ENCODE measurements at regions of chr22 and their contacts with region 1.

Region 1: GRCh38 chr22:50562523-50563412 is at the start of gene SYCE3:
- DNase-seq: peak; percentile 97
- ATAC-seq: peak; percentile 96
- H3K4me3 ChIP-seq: peak within 1 kb of the TSS; percentile 5 to 83 (median 72)
- H3K4me3 Mint-ChIP-seq: peak within 1 kb of the TSS; percentile 87
- H3K27ac ChIP-seq: peak within 1 kb of the TSS in 1 of 2 donors; percentile 37
- H3K27ac Mint-ChIP-seq: peak within 1 kb of the TSS; percentile 87
- H3K4me1 ChIP-seq: peaks cover 5 to 9% of the 10 kb centered on the region in 2 donors
- H3K4me1 Mint-ChIP-seq: peaks cover 16% of the 10 kb centered on the region
- H3K27me3 ChIP-seq: no peaks in the 10 kb centered on the region
- H3K27me3 Mint-ChIP-seq: no peaks in the 10 kb centered on the region
- CTCF ChIP-seq: peak; percentile 89
- total RNA-seq, gene SYCE3: not detected in 2 replicates

Region 2: GRCh38 chr22:50530877-50531545 is 31.8 kb before region 1 on chr22:
- CTCF ChIA-PET with region 1: interaction called, 54 read pairs
- POLR2A ChIA-PET with region 1: interaction called, 32 read pairs
- intact Hi-C with region 1: loop called (anchors 1 kb)
- DNase-seq: peak; percentile 95
- ATAC-seq: peak; percentile 44
- H3K4me3 ChIP-seq: peak overlapping the region; percentile 47 to 95 (median 95)
- H3K4me3 Mint-ChIP-seq: peak overlapping the region; percentile 95
- H3K27ac ChIP-seq: peak overlapping the region; percentile 99 to 100
- H3K27ac Mint-ChIP-seq: peak overlapping the region; percentile 99
- H3K4me1 ChIP-seq: peaks cover 22 to 73% of the 10 kb centered on the region in 2 donors
- H3K4me1 Mint-ChIP-seq: peaks cover 54% of the 10 kb centered on the region
- H3K27me3 ChIP-seq: no peaks in the 10 kb centered on the region
- H3K27me3 Mint-ChIP-seq: no peaks in the 10 kb centered on the region
- CTCF ChIP-seq: no peak

Region 3: GRCh38 chr22:50537765-50538164 is 25.0 kb before region 1 on chr22:
- CTCF ChIA-PET with region 1: interaction called, 20 read pairs
- POLR2A ChIA-PET with region 1: interaction called, 9 read pairs
- intact Hi-C with region 1: loop called (anchors 2 kb)
- DNase-seq: no peak
- ATAC-seq: no peak
- H3K4me3 ChIP-seq: no peak overlapping the region
- H3K4me3 Mint-ChIP-seq: peak overlapping the region; percentile 56
- H3K27ac ChIP-seq: peak overlapping the region; percentile 95 to 96
- H3K27ac Mint-ChIP-seq: peak overlapping the region; percentile 92
- H3K4me1 ChIP-seq: peaks cover 39 to 72% of the 10 kb centered on the region in 2 donors
- H3K4me1 Mint-ChIP-seq: peaks cover 68% of the 10 kb centered on the region
- H3K27me3 ChIP-seq: no peaks in the 10 kb centered on the region
- H3K27me3 Mint-ChIP-seq: no peaks in the 10 kb centered on the region
- CTCF ChIP-seq: no peak

Region 4: DNA sequence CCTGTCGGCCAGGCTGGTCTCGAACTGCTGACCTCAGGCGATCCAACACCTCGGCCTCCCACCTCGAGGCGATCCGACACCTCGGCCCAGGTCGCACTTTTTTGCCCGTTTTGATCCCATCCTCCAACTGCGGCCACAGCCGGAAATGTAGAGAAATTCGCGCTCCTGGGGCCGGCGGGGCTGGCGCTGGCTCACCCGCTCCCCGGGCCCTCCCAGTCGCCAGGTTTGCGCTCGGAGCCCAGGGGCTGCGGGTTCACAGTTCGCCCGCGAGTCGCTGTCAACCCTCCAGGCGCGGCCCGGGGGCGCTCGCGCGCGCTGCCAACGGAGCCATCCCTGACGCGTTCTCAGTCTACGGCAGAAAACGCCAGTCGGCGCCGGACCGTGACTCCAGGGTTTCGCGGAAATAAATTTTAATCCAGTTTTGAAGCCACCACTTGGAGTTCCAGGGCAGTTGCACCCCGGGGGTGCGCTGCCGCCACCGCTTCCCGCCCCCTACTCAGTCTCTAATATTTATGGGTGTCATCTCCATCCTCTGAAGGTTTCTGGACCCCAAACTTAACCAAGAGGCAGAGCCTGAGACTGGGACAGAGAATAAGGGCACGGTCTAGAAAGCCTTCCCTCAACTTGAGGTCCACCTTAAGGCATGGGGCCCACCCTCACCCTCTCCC is 18.6 kb before region 1 on chr22:
- CTCF ChIA-PET with region 1: interaction called, 20 read pairs
- POLR2A ChIA-PET with region 1: interaction called, 9 read pairs
- intact Hi-C with region 1: loop called (anchors 2 kb)
- DNase-seq: peak; percentile 90
- ATAC-seq: peak; percentile 46
- H3K4me3 ChIP-seq: peak overlapping the region in 4 of 5 experiments; percentile 12 to 49 (median 33)
- H3K4me3 Mint-ChIP-seq: peak overlapping the region; percentile 45
- H3K27ac ChIP-seq: peak overlapping the region; percentile 72 to 75
- H3K27ac Mint-ChIP-seq: peak overlapping the region; percentile 90
- H3K4me1 ChIP-seq: peaks cover 42 to 63% of the 10 kb centered on the region in 2 donors
- H3K4me1 Mint-ChIP-seq: peaks cover 46% of the 10 kb centered on the region
- H3K27me3 ChIP-seq: no peaks in the 10 kb centered on the region
- H3K27me3 Mint-ChIP-seq: no peaks in the 10 kb centered on the region
- CTCF ChIP-seq: peak; percentile 79

Region 5: DNA sequence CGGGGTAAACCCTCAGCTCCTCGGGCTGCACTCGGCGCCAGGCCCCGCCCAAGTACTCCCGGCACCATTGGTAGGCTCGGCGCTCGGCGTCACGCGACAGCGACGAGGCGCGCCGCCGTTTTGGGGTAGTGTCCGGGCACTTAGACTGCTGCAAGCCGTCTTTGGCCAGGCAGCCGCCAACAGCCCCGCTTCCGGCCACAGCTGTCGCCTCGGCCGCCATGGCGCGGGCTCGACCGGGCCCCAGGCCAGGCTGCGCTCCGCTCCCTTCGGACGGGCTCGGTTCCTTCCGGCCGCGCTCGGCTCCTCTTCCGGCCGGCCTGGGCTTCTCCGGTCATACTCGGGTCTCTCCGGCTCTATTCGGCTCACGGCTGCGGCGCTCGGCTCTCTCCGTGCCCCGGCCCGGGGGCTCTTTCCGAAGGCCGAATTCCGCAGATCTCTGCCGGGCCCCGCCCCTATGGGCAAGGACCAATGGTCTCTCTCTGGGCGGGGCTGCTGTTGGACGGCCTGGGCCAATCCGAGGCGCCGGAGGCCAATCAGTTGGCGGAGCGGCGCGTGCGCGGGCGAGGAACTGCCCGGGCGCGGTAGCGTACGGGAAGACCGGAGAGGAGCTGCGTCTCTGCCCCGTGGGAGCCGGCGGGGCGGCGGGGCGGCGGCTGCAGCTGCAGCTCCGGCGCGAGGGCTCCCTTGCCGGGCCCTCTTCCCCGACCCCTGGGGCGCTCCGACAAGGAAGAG is 20.0 kb after region 1 on chr22 and contains the start of gene CHKB:
- CTCF ChIA-PET with region 1: interaction called, 6 read pairs
- POLR2A ChIA-PET with region 1: interaction called, 10 read pairs
- intact Hi-C with region 1: loop called (anchors 1 kb)
- DNase-seq: peak; percentile 98
- ATAC-seq: peak; percentile 94
- H3K4me3 ChIP-seq: peak within 1 kb of the TSS; percentile 58 to 91 (median 80)
- H3K4me3 Mint-ChIP-seq: peak within 1 kb of the TSS; percentile 89
- H3K27ac ChIP-seq: peak within 1 kb of the TSS; percentile 82 to 96
- H3K27ac Mint-ChIP-seq: peak within 1 kb of the TSS; percentile 93
- H3K4me1 ChIP-seq: peaks cover 14 to 18% of the 10 kb centered on the region in 2 donors
- H3K4me1 Mint-ChIP-seq: peaks cover 24% of the 10 kb centered on the region
- H3K27me3 ChIP-seq: no peaks in the 10 kb centered on the region
- H3K27me3 Mint-ChIP-seq: no peaks in the 10 kb centered on the region
- CTCF ChIP-seq: no peak
- total RNA-seq, gene CHKB: 238 and 239 TPM in 2 replicates

Region 6: DNA sequence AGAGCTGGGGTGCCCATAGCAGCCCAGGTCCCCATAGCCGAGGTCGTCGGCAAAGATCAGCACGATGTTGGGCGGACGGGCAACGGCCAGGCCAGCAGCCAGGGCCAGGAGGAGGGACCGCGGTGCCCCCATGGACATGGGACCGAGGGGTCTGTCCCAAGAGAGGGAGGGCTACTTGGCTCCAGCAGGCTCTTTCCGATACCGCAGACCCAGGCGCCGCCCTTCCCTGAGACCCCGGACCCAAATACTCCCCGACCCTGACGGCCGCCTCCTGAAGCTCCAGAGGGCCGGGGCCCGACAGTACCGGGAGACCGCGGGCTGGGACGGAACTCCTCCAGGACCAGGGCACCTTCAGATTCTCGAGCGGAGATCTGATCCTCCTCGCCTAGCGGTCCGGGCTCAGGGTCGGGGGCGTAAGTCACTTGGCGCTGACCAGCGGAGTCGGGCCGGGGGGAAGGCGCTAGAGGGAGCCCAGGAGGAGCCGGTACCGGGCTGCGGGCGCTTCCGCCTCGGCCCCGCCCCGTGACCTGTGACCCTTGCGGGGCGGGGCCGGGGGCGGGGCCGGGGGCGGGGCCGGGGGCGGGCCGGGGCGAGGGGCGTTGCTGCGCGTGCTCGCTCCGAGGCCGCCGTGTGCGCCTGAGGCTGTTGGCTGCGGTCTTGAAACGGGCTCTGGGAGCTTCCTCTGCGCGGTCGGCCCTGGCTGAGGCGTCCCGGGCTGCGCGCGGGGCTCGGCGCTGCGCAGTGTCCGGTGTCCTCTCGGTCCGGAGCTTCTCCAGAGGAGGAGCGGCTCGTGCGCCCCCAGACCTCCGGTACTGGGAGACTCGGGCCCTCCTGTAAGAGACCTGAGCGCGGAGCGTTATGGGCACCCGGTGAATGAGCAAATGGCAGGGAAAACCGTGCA is 65.1 kb after region 1 on chr22 and contains the start of gene ARSA:
- CTCF ChIA-PET with region 1: no interaction called
- POLR2A ChIA-PET with region 1: no interaction called
- intact Hi-C with region 1: loop called (anchors 2 kb)
- DNase-seq: peak; percentile 89
- ATAC-seq: peak; percentile 94
- H3K4me3 ChIP-seq: peak within 1 kb of the TSS; percentile 72 to 92 (median 80)
- H3K4me3 Mint-ChIP-seq: peak within 1 kb of the TSS; percentile 94
- H3K27ac ChIP-seq: peak within 1 kb of the TSS; percentile 64 to 72
- H3K27ac Mint-ChIP-seq: peak within 1 kb of the TSS; percentile 80
- H3K4me1 ChIP-seq: peaks cover 14 to 25% of the 10 kb centered on the region in 2 donors
- H3K4me1 Mint-ChIP-seq: peaks cover 19% of the 10 kb centered on the region
- H3K27me3 ChIP-seq: no peaks in the 10 kb centered on the region
- H3K27me3 Mint-ChIP-seq: no peaks in the 10 kb centered on the region
- CTCF ChIP-seq: peak; percentile 38
- total RNA-seq, gene ARSA: 77.1 and 82.0 TPM in 2 replicates

Region 7: GRCh38 chr22:50731811-50732624 is 169.2 kb after region 1 on chr22:
- CTCF ChIA-PET with region 1: no interaction called
- POLR2A ChIA-PET with region 1: no interaction called
- intact Hi-C with region 1: no loop called
- DNase-seq: peak; percentile 47
- ATAC-seq: peak; percentile 45
- H3K4me3 ChIP-seq: no peak overlapping the region
- H3K4me3 Mint-ChIP-seq: no peak overlapping the region
- H3K27ac ChIP-seq: no peak overlapping the region
- H3K27ac Mint-ChIP-seq: no peak overlapping the region
- H3K4me1 ChIP-seq: no peaks in the 10 kb centered on the region
- H3K4me1 Mint-ChIP-seq: peaks cover 7% of the 10 kb centered on the region
- H3K27me3 ChIP-seq: no peaks in the 10 kb centered on the region
- H3K27me3 Mint-ChIP-seq: peaks cover 8% of the 10 kb centered on the region
- CTCF ChIP-seq: peak; percentile 47